GM12878 (cell line): ENCODE measurements at regions of chr6 and their contacts with region 1.

Region 1: GRCh38 chr6:159862103-159862502 is 28.7 kb upstream of the MAS1 start:
- DNase-seq: no peak
- ATAC-seq: no peak
- H3K4me3 ChIP-seq: no peak overlapping the region
- H3K27ac ChIP-seq: no peak overlapping the region
- H3K4me1 ChIP-seq: no peaks in the 10 kb centered on the region
- H3K27me3 ChIP-seq: no peaks in the 10 kb centered on the region; a peak in 1 of 4 replicates
- CTCF ChIP-seq: no peak
- EP300 ChIP-seq: no peak
- POLR2A ChIP-seq: no peak
- RAD21 ChIP-seq: no peak

Region 2: GRCh38 chr6:159874435-159874834 is 12.3 kb after region 1 on chr6:
- CTCF ChIA-PET with region 1: interaction called, 12 read pairs
- POLR2A ChIA-PET with region 1: no interaction called
- RAD21 ChIA-PET with region 1: interaction called, 8 read pairs
- SMC1A ChIA-PET with region 1: interaction called, 9 read pairs
- in situ Hi-C with region 1: no loop called
- intact Hi-C with region 1: no loop called
- DNase-seq: no peak
- ATAC-seq: no peak
- H3K4me3 ChIP-seq: no peak overlapping the region
- H3K27ac ChIP-seq: no peak overlapping the region
- H3K4me1 ChIP-seq: no peaks in the 10 kb centered on the region
- H3K27me3 ChIP-seq: no peaks in the 10 kb centered on the region
- CTCF ChIP-seq: no peak
- EP300 ChIP-seq: no peak
- POLR2A ChIP-seq: no peak
- RAD21 ChIP-seq: no peak

Region 3: GRCh38 chr6:159941286-159942113 is 79.4 kb after region 1 on chr6:
- CTCF ChIA-PET with region 1: interaction called, 114 read pairs
- POLR2A ChIA-PET with region 1: interaction called, 3 read pairs
- RAD21 ChIA-PET with region 1: interaction called, 74 read pairs
- SMC1A ChIA-PET with region 1: interaction called, 113 read pairs
- in situ Hi-C with region 1: loop called (anchors 5 kb)
- intact Hi-C with region 1: loop called (anchors 1 kb)
- DNase-seq: peak; percentile 55
- ATAC-seq: peak; percentile 98
- H3K4me3 ChIP-seq: no peak overlapping the region
- H3K27ac ChIP-seq: no peak overlapping the region
- H3K4me1 ChIP-seq: no peaks in the 10 kb centered on the region
- H3K27me3 ChIP-seq: no peaks in the 10 kb centered on the region
- CTCF ChIP-seq: peak; percentile 47 to 81 (median 56); a peak in 4 of 6 replicates
- EP300 ChIP-seq: no peak
- POLR2A ChIP-seq: no peak
- RAD21 ChIP-seq: peak; percentile 89

Region 4: GRCh38 chr6:160102956-160103824 is 241.1 kb after region 1 on chr6:
- CTCF ChIA-PET with region 1: interaction called, 13 read pairs
- POLR2A ChIA-PET with region 1: no interaction called
- RAD21 ChIA-PET with region 1: interaction called, 6 read pairs
- SMC1A ChIA-PET with region 1: interaction called, 4 read pairs
- in situ Hi-C with region 1: no loop called
- intact Hi-C with region 1: loop called (anchors 1 kb)
- DNase-seq: no peak
- ATAC-seq: peak; percentile 82
- H3K4me3 ChIP-seq: no peak overlapping the region
- H3K27ac ChIP-seq: no peak overlapping the region
- H3K4me1 ChIP-seq: no peaks in the 10 kb centered on the region
- H3K27me3 ChIP-seq: no peaks in the 10 kb centered on the region
- CTCF ChIP-seq: peak; percentile 43 to 53 (median 43); a peak in 4 of 6 replicates
- EP300 ChIP-seq: no peak
- POLR2A ChIP-seq: no peak
- RAD21 ChIP-seq: peak; percentile 51

Region 5: DNA sequence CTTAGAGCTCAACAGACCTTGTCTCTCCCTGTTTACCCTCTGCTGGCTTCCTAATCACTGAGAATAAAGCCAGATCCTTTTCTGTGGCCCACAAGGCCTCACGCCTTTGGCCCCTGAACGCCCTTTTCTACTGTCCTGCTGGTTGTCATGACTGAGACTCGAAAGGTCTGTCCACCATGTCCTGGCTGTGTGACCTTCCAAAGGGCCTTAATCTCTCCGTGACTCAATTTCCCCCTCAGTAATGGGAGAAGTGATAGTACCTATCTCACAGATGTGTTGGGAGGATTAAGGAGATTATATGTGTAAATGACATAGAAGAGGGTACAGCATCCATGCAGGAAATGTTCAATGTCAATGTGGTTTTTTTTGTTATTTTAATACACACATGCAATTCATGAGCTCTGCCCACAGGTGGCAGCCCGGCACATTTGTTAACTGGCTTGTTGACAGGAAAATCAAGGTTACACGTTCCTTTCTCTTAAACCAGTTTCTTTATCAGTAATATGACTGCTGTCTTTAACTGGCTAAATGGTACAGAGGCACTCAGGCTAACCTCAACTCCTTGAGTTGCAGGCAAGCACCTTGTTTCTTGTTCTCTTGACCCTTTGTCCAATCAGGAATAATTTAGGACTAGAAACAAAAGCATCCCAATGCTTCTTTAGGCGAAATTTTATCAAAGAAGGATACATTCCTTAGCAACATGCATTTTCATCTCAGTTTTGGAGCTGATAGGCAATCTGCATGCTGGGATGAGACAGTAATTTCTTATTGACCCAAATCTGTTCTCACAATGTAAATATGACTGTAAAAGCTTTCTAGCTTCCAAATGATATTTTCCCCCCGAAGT is 276.1 kb after region 1 on chr6:
- CTCF ChIA-PET with region 1: interaction called, 6 read pairs
- POLR2A ChIA-PET with region 1: no interaction called
- RAD21 ChIA-PET with region 1: interaction called, 12 read pairs
- SMC1A ChIA-PET with region 1: interaction called, 4 read pairs
- in situ Hi-C with region 1: no loop called
- intact Hi-C with region 1: no loop called
- DNase-seq: peak; percentile 23
- ATAC-seq: peak; percentile 72
- H3K4me3 ChIP-seq: no peak overlapping the region
- H3K27ac ChIP-seq: no peak overlapping the region
- H3K4me1 ChIP-seq: no peaks in the 10 kb centered on the region
- H3K27me3 ChIP-seq: no peaks in the 10 kb centered on the region; a peak in 1 of 4 replicates
- CTCF ChIP-seq: peak; percentile 67 to 85 (median 77)
- EP300 ChIP-seq: no peak
- POLR2A ChIP-seq: no peak
- RAD21 ChIP-seq: peak; percentile 73

Region 6: GRCh38 chr6:160455541-160456213 is 593.6 kb after region 1 on chr6:
- CTCF ChIA-PET with region 1: interaction called, 24 read pairs
- POLR2A ChIA-PET with region 1: no interaction called
- RAD21 ChIA-PET with region 1: interaction called, 16 read pairs
- SMC1A ChIA-PET with region 1: interaction called, 17 read pairs
- in situ Hi-C with region 1: loop called (anchors 5 kb)
- intact Hi-C with region 1: loop called (anchors 5 kb)
- DNase-seq: peak; percentile 5
- ATAC-seq: peak; percentile 90
- H3K4me3 ChIP-seq: no peak overlapping the region
- H3K27ac ChIP-seq: no peak overlapping the region
- H3K4me1 ChIP-seq: no peaks in the 10 kb centered on the region
- H3K27me3 ChIP-seq: no peaks in the 10 kb centered on the region; a peak in 1 of 4 replicates
- CTCF ChIP-seq: peak; percentile 85 to 93 (median 89)
- EP300 ChIP-seq: no peak
- POLR2A ChIP-seq: no peak
- RAD21 ChIP-seq: peak; percentile 98

Region 7: GRCh38 chr6:160534050-160534696 is 672.1 kb after region 1 on chr6:
- CTCF ChIA-PET with region 1: interaction called, 10 read pairs
- POLR2A ChIA-PET with region 1: no interaction called
- RAD21 ChIA-PET with region 1: interaction called, 7 read pairs
- SMC1A ChIA-PET with region 1: interaction called, 9 read pairs
- in situ Hi-C with region 1: no loop called
- intact Hi-C with region 1: loop called (anchors 5 kb)
- DNase-seq: no peak
- ATAC-seq: peak; percentile 81
- H3K4me3 ChIP-seq: no peak overlapping the region
- H3K27ac ChIP-seq: no peak overlapping the region
- H3K4me1 ChIP-seq: no peaks in the 10 kb centered on the region
- H3K27me3 ChIP-seq: no peaks in the 10 kb centered on the region; a peak in 1 of 4 replicates
- CTCF ChIP-seq: peak; percentile 75 to 86 (median 84)
- EP300 ChIP-seq: no peak
- POLR2A ChIP-seq: no peak
- RAD21 ChIP-seq: peak; percentile 83